Ascending aorta (tissue), 2 donors: ENCODE measurements at regions of chr19 and their contacts with region 1.

Region 1: DNA sequence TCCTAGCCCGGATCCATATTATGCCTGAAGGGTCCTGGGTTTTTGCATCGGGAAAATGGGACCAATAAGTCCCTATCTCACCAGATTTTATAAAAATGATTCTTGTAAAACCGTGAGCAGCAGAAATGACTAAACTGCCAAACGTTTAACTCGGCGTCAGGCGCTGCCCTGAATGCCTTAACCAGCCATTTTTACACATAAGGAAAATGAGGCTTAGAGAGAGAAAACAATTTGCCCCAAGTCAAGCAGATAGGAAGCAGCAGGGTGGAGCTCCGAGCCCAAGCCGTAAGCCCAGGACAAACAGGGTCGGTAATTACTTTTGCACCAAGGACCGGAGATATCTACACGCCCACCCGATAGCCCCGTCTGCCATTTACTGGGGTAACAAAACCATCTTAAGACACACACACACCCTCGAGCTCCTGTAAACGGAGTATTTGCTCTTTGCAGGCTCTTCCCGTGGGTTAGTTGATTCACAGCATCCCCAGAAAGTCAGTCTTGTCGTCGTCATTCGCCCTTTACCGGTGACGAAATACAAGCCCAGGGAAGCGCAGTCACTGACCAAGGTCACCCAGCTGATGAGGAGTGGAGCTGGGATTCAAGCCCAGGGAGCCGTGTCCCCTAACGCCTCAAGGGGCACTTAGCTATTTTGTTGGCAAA is 16.0 kb upstream of the MRI1 start:
- DNase-seq: no peak
- H3K4me3 ChIP-seq: peak overlapping the region; percentile 78 to 90
- H3K27ac ChIP-seq: peak overlapping the region; percentile 80 to 91
- H3K4me1 ChIP-seq: peaks cover 5 to 11% of the 10 kb centered on the region in 2 donors
- H3K27me3 ChIP-seq: no peaks in the 10 kb centered on the region
- CTCF ChIP-seq: no peak

Region 2: DNA sequence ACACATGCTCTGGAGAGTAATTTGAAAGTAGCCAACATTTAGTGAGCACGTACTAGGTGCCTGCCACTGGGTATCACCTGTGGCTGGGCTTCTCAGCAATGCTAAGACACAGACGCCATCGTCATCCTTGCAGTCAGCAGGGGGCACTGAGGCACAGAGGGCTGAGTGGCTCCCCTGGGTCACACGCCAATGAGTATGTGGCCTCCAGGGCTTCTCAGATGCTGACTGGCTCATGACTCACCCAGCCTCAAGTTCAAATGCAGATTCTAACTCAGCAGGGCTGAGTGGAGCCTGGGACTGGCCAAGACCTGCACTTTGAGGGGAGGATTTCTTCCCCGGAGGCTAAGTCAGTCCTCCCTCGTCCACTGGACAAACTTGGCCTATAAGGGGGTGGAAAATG is 126.9 kb before region 1 on chr19:
- intact Hi-C with region 1: no loop called
- DNase-seq: no peak
- H3K4me3 ChIP-seq: no peak overlapping the region
- H3K27ac ChIP-seq: no peak overlapping the region
- H3K4me1 ChIP-seq: no peaks in the 10 kb centered on the region
- H3K27me3 ChIP-seq: no peaks in the 10 kb centered on the region
- CTCF ChIP-seq: no peak

Region 3: DNA sequence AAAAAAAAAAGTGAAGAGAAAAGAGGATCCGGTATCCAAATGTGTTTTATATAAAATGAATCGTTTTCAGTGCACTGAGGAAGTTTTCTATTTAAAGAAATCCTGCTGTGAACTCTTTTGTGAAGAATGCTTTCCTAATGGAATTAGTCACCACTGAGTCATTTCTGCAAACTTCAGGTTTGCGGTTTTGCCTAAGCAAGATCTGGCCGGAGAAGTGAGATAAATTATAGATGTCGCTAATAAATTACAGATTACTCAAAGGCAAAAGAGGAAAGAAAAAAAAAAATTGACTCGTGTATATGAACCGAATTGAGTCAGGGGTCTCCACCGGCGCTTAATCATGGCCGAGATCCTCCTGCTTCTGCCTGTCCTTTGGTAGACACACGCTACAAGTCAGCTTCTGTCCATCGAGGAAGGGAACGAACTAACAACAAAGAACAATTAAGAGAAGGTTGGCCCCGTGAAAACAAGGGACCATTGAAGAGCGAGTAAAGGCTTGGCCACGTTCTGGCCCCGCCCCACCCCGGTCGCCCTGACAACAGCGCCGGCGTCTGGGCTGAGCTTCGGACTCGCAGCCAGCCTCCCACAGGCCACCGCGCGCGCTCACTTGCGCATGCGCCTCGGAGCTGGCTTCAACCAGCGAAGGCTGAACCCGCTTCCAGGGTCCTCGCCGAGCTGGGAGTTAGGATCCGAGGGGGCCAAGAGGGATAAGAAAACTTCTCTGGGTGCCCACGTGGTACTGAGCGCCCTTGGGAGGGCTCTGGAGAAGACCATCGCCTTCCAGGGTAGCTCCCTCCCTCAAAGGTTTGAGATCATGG is 16.9 kb before region 1 on chr19:
- intact Hi-C with region 1: loop called (anchors 1 kb)
- DNase-seq: peak; percentile 65 to 96
- H3K4me3 ChIP-seq: peak overlapping the region; percentile 50 to 70
- H3K27ac ChIP-seq: peak overlapping the region; percentile 88 to 95
- H3K4me1 ChIP-seq: peaks cover 3 to 39% of the 10 kb centered on the region in 2 donors
- H3K27me3 ChIP-seq: no peaks in the 10 kb centered on the region
- CTCF ChIP-seq: no peak

Region 4: GRCh38 chr19:13764101-13764807 is 16.0 kb after region 1 on chr19 and contains the start of gene MRI1:
- intact Hi-C with region 1: loop called (anchors 1 kb)
- DNase-seq: peak in 1 of 2 donors; percentile 88
- H3K4me3 ChIP-seq: peak within 1 kb of the TSS; percentile 86 to 90
- H3K27ac ChIP-seq: peak within 1 kb of the TSS; percentile 73 to 74
- H3K4me1 ChIP-seq: peaks cover 4 to 9% of the 10 kb centered on the region in 2 donors
- H3K27me3 ChIP-seq: no peaks in the 10 kb centered on the region
- CTCF ChIP-seq: no peak
- total RNA-seq, gene MRI1: 89.9 TPM

Region 5: DNA sequence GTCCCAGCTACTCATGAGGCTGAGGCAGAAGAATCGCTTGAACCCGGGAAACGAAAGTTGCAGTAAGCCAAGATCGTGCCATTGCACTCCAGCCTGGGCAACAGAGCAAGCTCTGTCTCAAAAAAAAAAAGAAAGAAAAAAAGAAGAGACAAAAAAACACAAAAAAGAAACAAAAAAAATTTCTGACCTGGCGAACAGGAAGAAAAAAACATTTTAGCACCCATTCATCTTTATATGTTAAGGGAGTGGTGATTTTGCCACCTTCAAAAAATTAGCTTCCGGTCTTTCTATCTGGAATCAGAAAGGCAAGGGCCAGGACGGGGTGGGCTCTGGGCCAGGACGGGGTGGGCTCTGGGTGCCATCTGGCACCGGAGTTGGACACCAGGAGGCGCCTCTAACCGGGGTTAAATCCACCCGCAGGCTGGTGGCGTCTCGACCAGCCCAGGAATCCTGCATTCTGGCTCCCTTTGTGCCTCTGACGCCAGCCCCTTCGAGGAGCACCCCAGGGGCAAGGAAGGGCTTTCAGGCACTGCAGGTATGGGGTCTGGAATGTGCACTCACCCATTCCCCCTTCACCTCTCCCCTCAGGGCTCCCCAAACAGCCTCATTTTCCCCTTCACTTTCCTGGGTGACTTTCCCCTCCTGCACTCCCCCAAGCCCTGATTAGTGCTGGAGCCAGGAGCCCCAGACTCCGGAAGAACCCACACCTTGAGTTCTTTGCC is 36.6 kb after region 1 on chr19:
- intact Hi-C with region 1: loop called (anchors 2 kb)
- DNase-seq: peak; percentile 28 to 87
- H3K4me3 ChIP-seq: no peak overlapping the region
- H3K27ac ChIP-seq: peak overlapping the region; percentile 76 to 94
- H3K4me1 ChIP-seq: peaks cover 25 to 53% of the 10 kb centered on the region in 2 donors
- H3K27me3 ChIP-seq: no peaks in the 10 kb centered on the region
- CTCF ChIP-seq: peak; percentile 72 to 83 (median 76)

Region 6: GRCh38 chr19:13794757-13795589 is 46.7 kb after region 1 on chr19 and contains the start of gene ZSWIM4:
- intact Hi-C with region 1: loop called (anchors 1 kb)
- DNase-seq: peak; percentile 98 to 100
- H3K4me3 ChIP-seq: peak within 1 kb of the TSS; percentile 86 to 88
- H3K27ac ChIP-seq: peak within 1 kb of the TSS; percentile 92 to 96
- H3K4me1 ChIP-seq: peaks cover 7 to 30% of the 10 kb centered on the region in 2 donors
- H3K27me3 ChIP-seq: no peaks in the 10 kb centered on the region
- CTCF ChIP-seq: no peak
- total RNA-seq, gene ZSWIM4: 23.2 TPM

Region 7: DNA sequence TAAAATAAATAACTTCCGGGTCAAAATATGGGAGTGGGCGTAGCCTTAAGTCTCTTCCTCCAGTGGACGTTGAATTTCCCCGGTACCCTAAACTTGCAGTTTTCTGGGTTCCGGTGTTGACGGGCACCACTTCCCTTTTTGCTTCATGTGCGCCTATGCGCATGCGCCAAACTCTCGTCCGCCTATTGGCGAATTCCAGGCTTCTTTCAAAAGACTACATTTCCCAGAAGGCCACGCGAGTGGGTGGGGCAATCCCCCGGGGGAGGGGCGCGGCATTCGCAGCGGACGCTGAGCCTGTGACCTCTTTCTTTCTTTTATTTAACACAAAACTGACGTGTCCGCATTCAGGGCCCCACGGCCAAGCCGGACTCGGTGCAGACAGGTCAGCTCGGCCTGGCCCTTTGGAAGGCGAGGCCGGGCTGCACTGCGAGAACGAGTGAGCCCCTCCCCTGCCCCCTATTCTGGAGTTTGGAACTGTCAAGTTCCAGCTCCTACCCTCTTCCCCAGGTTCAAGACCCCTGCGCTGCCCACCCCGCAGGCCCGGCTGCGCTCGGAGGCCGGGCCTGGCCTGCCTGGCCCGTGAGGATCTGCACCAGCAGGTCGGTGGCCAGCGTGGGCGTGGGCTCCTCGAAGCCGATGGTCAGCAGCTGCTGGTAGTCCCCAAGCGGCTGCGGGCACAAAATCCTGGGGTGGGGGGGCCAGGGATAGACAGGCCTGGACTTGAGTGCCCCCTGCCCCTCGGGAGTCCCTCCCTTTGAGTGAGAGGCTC is 333.2 kb after region 1 on chr19:
- intact Hi-C with region 1: loop called (anchors 5 kb)
- DNase-seq: peak; percentile 94 to 99
- H3K4me3 ChIP-seq: peak overlapping the region; percentile 80 to 93
- H3K27ac ChIP-seq: peak overlapping the region; percentile 92 to 97
- H3K4me1 ChIP-seq: peaks cover 4 to 14% of the 10 kb centered on the region in 2 donors
- H3K27me3 ChIP-seq: no peaks in the 10 kb centered on the region
- CTCF ChIP-seq: no peak

Region 8: GRCh38 chr19:14117668-14118164 is 369.4 kb after region 1 on chr19 and contains the start of gene PRKACA:
- intact Hi-C with region 1: loop called (anchors 1 kb)
- DNase-seq: peak; percentile 97 to 99
- H3K4me3 ChIP-seq: peak within 1 kb of the TSS; percentile 71 to 96
- H3K27ac ChIP-seq: peak within 1 kb of the TSS; percentile 92 to 99
- H3K4me1 ChIP-seq: peaks cover 23 to 51% of the 10 kb centered on the region in 2 donors
- H3K27me3 ChIP-seq: no peaks in the 10 kb centered on the region
- CTCF ChIP-seq: no peak
- total RNA-seq, gene PRKACA: 92.6 TPM